Left ventricle myocardium inferior (tissue), 1 donor: ENCODE measurements at regions of chr12 and their contacts with region 1.

Region 1: GRCh38 chr12:95858479-95859343 is at the start of gene SNRPF:
- DNase-seq: peak; percentile 92
- H3K4me3 ChIP-seq: peak within 1 kb of the TSS; percentile 95
- H3K27ac ChIP-seq: peak within 1 kb of the TSS; percentile 85
- H3K4me1 ChIP-seq: peaks cover 35% of the 10 kb centered on the region
- H3K27me3 ChIP-seq: no peaks in the 10 kb centered on the region
- CTCF ChIP-seq: peak; percentile 31
- total RNA-seq, gene SNRPF: 10.7 TPM

Region 2: DNA sequence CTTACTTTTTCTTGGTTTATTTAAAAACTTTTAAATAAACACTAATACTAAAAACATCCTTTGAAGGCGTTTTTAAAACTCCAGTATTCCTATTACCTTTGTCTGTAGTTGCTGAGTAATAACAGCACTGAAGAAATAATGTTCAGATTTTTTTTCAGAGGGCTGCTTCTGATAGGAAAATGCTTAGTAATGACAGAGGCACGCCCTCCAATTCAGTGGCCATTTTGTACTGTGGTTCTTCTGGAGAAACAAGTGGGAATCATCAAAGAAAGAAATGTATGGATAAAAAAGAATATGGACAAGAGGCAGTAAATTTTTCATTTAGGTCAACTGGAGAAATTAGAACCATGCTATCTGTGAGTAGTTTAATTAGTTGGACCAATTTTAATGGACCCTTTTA is 627.5 kb before region 1 on chr12:
- intact Hi-C with region 1: loop called (anchors 10 kb)
- DNase-seq: no peak
- H3K4me3 ChIP-seq: no peak overlapping the region
- H3K27ac ChIP-seq: no peak overlapping the region
- H3K4me1 ChIP-seq: peaks cover 62% of the 10 kb centered on the region
- H3K27me3 ChIP-seq: no peaks in the 10 kb centered on the region
- CTCF ChIP-seq: no peak

Region 3: DNA sequence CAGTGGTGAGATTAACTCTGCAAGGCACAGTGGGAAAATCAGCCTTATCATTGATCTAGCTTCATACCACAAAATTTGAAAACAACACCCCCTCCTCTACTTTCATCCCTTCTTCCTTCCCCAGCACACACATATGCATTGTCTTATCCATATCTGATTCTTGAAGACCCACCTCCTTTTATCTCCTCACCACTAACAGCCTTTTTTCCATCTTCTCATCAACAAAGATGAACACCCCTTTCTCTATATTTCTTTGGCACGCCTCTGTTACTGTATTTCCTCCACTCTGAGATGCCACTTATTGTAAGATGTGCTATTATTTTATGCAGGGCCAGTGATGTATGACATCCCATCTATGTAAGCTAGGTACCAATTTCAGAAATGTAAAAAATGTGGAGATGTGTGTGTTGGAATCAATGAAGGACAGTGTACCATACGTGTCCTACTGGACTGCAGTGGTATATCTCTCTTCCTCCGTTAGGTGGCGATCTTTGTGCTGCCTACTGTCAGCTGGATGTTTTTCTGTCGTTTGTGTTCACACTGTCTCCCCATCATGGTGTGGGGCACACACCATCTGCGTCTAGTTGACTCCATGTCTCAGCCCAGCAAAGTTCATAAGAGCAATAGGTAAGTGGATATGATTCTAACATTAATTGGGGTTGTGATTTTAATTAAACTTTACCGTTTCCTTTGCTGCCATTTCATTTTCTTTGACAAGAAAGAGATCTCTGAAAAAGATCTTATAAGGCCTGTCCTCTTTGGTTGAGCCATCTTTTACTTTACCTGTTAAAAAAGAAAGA is 59.7 kb after region 1 on chr12:
- intact Hi-C with region 1: no loop called
- DNase-seq: no peak
- H3K4me3 ChIP-seq: no peak overlapping the region
- H3K27ac ChIP-seq: no peak overlapping the region
- H3K4me1 ChIP-seq: no peaks in the 10 kb centered on the region
- H3K27me3 ChIP-seq: peaks cover 10% of the 10 kb centered on the region
- CTCF ChIP-seq: peak; percentile 89